OCI-LY7 (cell line): ENCODE measurements at regions of chr12 and their contacts with region 1.

Region 1: GRCh38 chr12:12786716-12787601 is 1.5 kb downstream of the APOLD1 start:
- DNase-seq: no peak
- H3K4me3 ChIP-seq: no peak overlapping the region
- H3K27ac ChIP-seq: no peak overlapping the region
- H3K4me1 ChIP-seq: peaks cover 7% of the 10 kb centered on the region
- CTCF ChIP-seq: no peak

Region 2: DNA sequence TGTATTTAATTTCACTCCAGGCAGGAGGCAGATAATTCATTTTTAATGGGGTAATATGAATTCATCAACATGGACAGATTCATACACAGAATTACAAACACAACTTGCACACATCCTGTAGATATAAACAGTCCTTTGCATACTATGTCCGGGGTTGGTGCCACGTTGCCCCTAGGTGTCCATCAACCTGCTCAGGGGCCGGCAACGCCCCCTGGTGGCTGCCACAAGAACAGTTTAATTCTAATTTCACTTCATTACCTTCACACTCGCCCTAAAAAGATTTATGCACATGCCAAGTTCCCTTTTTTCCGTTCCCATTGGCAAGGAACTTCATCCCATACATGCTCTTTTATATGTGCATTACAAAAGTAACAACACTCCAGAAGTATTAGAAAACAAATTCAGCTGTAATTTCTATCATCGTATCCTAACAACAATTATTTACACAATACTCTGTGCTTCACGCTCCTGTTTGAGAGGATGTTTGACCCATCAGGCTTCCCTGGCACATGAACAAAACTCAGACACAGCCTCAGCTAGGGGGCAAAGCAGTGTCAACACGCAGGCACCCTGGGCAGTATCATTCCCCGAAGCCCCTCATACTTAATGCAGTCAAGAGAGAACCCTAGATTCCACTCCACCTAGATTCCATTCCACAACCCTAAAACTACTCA is 452.5 kb before region 1 on chr12:
- CTCF ChIA-PET with region 1: no interaction called
- POLR2A ChIA-PET with region 1: no interaction called
- intact Hi-C with region 1: no loop called
- DNase-seq: peak; percentile 76
- H3K4me3 ChIP-seq: no peak overlapping the region
- H3K27ac ChIP-seq: no peak overlapping the region
- H3K4me1 ChIP-seq: no peaks in the 10 kb centered on the region
- CTCF ChIP-seq: peak; percentile 96

Region 3: DNA sequence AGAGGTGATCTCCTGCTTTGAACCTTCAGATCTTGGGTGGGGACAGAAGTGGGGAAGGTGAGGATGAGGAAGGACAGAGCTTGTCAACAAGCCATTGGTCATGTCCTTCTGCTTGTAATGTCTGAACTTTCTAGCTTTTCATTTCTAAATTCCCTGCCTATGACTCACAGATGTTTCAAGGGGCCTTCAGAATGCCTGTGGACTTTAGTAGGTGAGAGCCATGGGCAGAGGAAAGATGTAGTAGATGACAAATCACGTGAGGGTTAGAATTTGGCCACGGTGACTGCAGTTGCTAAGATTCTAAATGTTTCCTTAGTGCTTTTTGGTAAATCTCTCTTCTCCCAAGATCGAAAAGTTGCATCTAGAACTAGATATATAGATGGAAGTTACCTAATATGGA is 194.0 kb before region 1 on chr12:
- CTCF ChIA-PET with region 1: no interaction called
- POLR2A ChIA-PET with region 1: no interaction called
- intact Hi-C with region 1: no loop called
- DNase-seq: no peak
- H3K4me3 ChIP-seq: no peak overlapping the region
- H3K27ac ChIP-seq: no peak overlapping the region
- H3K4me1 ChIP-seq: no peaks in the 10 kb centered on the region
- CTCF ChIP-seq: no peak

Region 4: DNA sequence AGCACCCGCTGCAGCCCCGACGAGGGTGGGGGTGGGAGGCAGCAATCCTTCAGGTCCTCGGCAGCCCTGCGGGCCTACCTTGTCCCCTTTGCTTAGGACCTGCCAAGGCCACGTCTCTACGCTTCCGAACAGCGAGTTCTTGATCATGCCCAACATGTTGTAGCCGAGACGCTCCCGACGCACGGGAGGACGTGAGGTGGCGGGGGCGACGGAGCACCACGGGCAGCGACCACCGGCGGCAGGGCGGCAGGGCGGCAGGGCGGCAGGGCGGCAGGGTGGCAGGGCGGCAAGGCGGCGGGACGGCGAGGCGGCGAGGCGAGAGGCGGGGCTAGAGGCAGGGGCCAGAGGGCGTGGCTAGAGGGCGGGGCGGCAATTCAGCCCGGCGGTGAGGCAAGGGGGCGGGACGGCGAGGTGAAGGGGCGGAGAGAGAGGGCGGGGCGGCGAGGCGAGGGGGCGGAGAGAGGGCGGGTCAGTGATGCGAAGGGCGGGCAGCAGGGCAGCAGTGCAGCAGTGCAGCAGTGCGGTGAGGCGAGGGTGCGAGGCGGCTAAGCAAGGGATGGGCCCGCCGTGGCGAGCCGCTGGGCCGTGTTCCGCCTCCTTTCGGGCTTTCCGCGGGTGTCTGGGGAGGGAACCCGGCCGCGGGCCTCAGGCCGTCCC is 213.1 kb after region 1 on chr12 and contains the start of gene HEBP1:
- CTCF ChIA-PET with region 1: no interaction called
- POLR2A ChIA-PET with region 1: no interaction called
- intact Hi-C with region 1: loop called (anchors 10 kb)
- DNase-seq: peak; percentile 85
- H3K4me3 ChIP-seq: peak within 1 kb of the TSS; percentile 62
- H3K27ac ChIP-seq: no peak within 1 kb of the TSS
- H3K4me1 ChIP-seq: peaks cover 9% of the 10 kb centered on the region
- CTCF ChIP-seq: no peak
- total RNA-seq, gene HEBP1: 0.16 and 0.26 TPM in 2 replicates

Region 5: DNA sequence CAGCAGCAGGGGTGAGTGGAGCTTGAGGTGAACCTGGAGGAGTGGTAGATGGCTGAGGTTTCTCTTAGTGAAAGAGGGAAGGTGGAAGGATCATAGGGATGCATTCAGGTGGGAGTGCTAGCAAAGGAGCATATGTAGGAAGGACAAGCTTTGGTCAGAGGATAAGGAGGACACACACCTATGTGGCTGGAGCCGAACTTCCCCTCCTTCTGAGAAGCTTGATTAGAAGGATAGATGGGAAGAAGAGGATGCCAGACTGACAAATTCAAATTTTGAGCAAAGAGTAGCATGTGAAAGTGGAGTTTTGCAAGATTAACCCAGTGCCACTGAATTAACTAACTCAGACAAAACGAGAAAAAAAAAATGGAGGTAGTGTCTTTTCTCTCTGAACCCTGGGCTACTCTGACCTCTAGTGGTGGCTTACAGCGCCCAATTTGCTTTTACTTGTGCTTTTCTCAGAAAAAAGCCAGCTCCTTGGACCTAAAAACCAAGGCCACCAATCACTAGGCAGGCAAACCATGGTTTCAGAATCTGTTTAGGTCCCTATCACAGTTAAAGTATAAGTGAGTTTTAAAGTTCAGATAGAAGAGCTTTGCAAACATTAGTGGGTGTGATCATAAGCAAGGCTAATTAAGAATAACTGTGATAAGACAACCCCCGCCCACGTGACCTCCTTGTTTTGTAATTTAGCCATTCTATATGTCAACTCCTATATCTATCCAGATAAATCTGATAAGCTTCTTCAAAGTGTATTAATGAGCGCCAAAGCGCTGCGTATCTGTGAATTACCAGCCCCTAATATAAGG is 425.1 kb after region 1 on chr12:
- CTCF ChIA-PET with region 1: no interaction called
- POLR2A ChIA-PET with region 1: no interaction called
- intact Hi-C with region 1: loop called (anchors 10 kb)
- DNase-seq: peak; percentile 70
- H3K4me3 ChIP-seq: peak overlapping the region; percentile 8
- H3K27ac ChIP-seq: no peak overlapping the region
- H3K4me1 ChIP-seq: no peaks in the 10 kb centered on the region
- CTCF ChIP-seq: peak; percentile 92